Activated T-helper 2 cell treated with anti-CD3 and anti-CD28 coated beads, Interferon-gamma antibody, Interleukin-2, Interleukin-4, amounts not matched to agents 10 μg/mL and 5 μg/mL and 100 μg/mL, durations not matched to agents 14 hours and 24 hours and 36 hours (primary cell): ENCODE measurements at regions of chr3 and their contacts with region 1.

Region 1: GRCh38 chr3:18740631-18741583 is 315.8 kb upstream of the SATB1 start:
- DNase-seq: peak; percentile 61
- H3K4me3 Mint-ChIP-seq: peak overlapping the region; percentile 53
- H3K27ac Mint-ChIP-seq: peak overlapping the region; percentile 90
- H3K4me1 Mint-ChIP-seq: peaks cover 85% of the 10 kb centered on the region
- H3K27me3 Mint-ChIP-seq: no peaks in the 10 kb centered on the region

Region 2: GRCh38 chr3:18643281-18643680 is 97.6 kb before region 1 on chr3:
- intact Hi-C with region 1: loop called (anchors 1 kb)
- DNase-seq: no peak
- H3K4me3 Mint-ChIP-seq: no peak overlapping the region
- H3K27ac Mint-ChIP-seq: peak overlapping the region; percentile 60
- H3K4me1 Mint-ChIP-seq: peaks cover 65% of the 10 kb centered on the region
- H3K27me3 Mint-ChIP-seq: no peaks in the 10 kb centered on the region

Region 3: GRCh38 chr3:18717598-18717997 is 23.3 kb before region 1 on chr3:
- intact Hi-C with region 1: loop called (anchors 1 kb)
- DNase-seq: no peak
- H3K4me3 Mint-ChIP-seq: peak overlapping the region; percentile 59
- H3K27ac Mint-ChIP-seq: peak overlapping the region; percentile 98
- H3K4me1 Mint-ChIP-seq: peaks cover 67% of the 10 kb centered on the region
- H3K27me3 Mint-ChIP-seq: no peaks in the 10 kb centered on the region

Region 4: GRCh38 chr3:18758047-18758704 is 17.3 kb after region 1 on chr3:
- intact Hi-C with region 1: loop called (anchors 1 kb)
- DNase-seq: peak; percentile 28
- H3K4me3 Mint-ChIP-seq: no peak overlapping the region
- H3K27ac Mint-ChIP-seq: peak overlapping the region; percentile 85
- H3K4me1 Mint-ChIP-seq: peaks cover 43% of the 10 kb centered on the region
- H3K27me3 Mint-ChIP-seq: no peaks in the 10 kb centered on the region

Region 5: GRCh38 chr3:18853269-18853668 is 112.4 kb after region 1 on chr3:
- intact Hi-C with region 1: no loop called
- DNase-seq: no peak
- H3K4me3 Mint-ChIP-seq: no peak overlapping the region
- H3K27ac Mint-ChIP-seq: no peak overlapping the region
- H3K4me1 Mint-ChIP-seq: no peaks in the 10 kb centered on the region
- H3K27me3 Mint-ChIP-seq: no peaks in the 10 kb centered on the region

Region 6: DNA sequence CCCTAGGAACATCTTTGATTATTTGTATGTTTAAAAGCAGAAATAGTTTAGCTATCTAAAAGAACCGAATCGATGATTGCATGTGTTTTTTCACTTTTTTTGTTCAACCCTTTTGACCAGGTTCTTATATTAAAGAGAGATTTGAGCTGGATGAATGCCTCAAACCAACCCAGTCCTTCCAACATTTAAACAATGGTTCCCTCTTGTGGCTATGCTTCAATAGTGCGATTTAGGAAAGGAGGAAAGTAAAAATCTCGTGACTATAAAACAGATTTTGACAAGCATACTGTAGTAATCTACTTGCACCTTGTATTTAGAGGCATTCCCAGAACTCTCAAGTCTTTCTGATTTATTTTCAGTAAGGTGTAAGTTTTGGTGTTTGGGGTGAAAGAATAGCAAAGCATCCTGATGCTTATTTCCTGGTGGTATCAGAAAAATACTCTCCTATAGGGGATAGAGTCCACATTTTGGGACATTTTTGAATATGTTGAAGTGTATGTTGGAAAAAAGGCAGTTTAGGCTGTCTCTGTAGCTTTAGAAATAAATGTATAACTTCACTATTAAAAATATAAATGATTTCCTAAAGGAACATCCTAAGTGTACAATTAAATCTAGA is 247.8 kb after region 1 on chr3:
- intact Hi-C with region 1: loop called (anchors 1 kb)
- DNase-seq: no peak
- H3K4me3 Mint-ChIP-seq: peak overlapping the region; percentile 82
- H3K27ac Mint-ChIP-seq: peak overlapping the region; percentile 92
- H3K4me1 Mint-ChIP-seq: peaks cover 34% of the 10 kb centered on the region
- H3K27me3 Mint-ChIP-seq: peaks cover 3% of the 10 kb centered on the region